PC-3 (cell line): ENCODE measurements at regions of chr6 and their contacts with region 1.

Region 1: DNA sequence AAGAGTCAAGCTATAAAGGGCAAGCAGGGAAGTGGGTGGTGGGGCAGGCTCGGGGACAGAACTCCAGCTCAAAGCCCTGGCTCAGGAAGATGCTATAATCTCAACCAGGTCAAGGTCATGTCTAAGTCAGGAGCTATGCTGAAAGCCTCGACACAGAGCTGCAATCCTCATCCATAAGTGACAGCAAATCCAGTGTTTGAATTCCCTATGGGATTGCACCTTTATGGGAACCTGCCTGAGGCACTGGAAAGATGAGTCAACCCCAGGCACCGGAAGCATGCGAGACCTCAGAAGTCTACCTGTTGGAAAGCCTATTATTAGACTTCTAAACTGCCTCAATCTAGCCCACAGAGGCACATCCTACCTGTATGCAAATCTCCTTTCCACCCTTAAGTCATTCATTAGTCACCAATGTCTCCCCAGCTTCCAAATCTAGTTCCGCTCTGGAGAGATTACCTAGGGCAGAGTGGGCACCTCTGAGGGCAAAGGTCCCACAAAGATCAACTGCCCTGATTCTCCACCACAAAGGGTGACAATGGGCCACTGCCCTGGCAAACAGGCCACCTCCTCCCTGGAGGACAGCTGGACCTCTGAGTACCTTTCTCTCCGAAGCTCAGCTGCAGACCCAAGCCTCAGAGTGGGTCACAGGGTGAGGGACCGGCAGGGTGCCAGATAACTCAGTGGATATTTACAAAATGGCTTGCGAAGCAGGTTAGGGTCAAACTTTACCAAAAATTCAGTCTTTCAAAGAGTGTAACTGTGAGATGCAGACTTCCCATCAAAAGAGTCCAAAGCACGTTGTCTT is 287.0 kb downstream of the CDC5L start:
- DNase-seq: peak; percentile 94
- ATAC-seq: peak; percentile 19
- H3K4me3 ChIP-seq: no peak overlapping the region
- H3K27ac ChIP-seq: peak overlapping the region; percentile 97
- H3K4me1 ChIP-seq: peaks cover 49% of the 10 kb centered on the region
- H3K27me3 ChIP-seq: no peaks in the 10 kb centered on the region
- CTCF ChIP-seq: no peak

Region 2: DNA sequence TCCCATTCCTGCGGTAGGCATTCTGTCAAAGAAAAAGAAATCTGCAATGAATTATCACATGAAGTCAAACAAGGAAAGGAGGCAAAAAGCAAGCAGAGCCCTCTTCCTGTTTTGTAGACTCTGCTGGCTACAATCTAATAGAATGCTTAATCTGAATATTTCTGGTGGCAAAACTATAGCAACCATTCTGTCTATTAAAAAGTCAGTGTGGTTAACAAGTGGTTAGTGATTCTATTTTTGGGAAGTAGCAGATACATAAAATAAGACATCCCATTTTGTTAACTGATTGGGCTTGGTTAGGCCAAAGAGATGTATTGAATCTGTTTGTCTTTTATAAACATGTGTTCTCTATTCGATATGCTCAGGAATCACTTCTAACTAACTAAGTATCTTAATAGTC is 155.3 kb after region 1 on chr6:
- CTCF ChIA-PET with region 1: no interaction called
- POLR2A ChIA-PET with region 1: no interaction called
- intact Hi-C with region 1: loop called (anchors 10 kb)
- DNase-seq: no peak
- ATAC-seq: no peak
- H3K4me3 ChIP-seq: no peak overlapping the region
- H3K27ac ChIP-seq: no peak overlapping the region
- H3K4me1 ChIP-seq: peaks cover 5% of the 10 kb centered on the region
- H3K27me3 ChIP-seq: no peaks in the 10 kb centered on the region
- CTCF ChIP-seq: no peak

Region 3: GRCh38 chr6:44925100-44925739 is 250.7 kb after region 1 on chr6:
- CTCF ChIA-PET with region 1: no interaction called
- POLR2A ChIA-PET with region 1: no interaction called
- intact Hi-C with region 1: loop called (anchors 10 kb)
- DNase-seq: no peak
- ATAC-seq: no peak
- H3K4me3 ChIP-seq: no peak overlapping the region
- H3K27ac ChIP-seq: no peak overlapping the region; the same call in 1 of the 2 replicates
- H3K4me1 ChIP-seq: peaks cover 5% of the 10 kb centered on the region
- H3K27me3 ChIP-seq: no peaks in the 10 kb centered on the region
- CTCF ChIP-seq: no peak